ENCODE measurements at regions of chr10 and their contacts with region 1.

Region 1: GRCh38 chr10:32378363-32379317 is 31.7 kb upstream of the EPC1 start:
- DNase-seq: peak; percentile 83 to 97 (median 90)
- ATAC-seq: peak; percentile 89
- H3K4me3 ChIP-seq: peak overlapping the region; percentile 79
- H3K4me3 Mint-ChIP-seq: no peak overlapping the region
- H3K27ac ChIP-seq: peak overlapping the region; percentile 61 to 81
- H3K27ac Mint-ChIP-seq: no peak overlapping the region
- H3K4me1 ChIP-seq: no peaks in the 10 kb centered on the region
- H3K4me1 Mint-ChIP-seq: peaks cover 20% of the 10 kb centered on the region
- H3K27me3 ChIP-seq: no peaks in the 10 kb centered on the region
- H3K27me3 Mint-ChIP-seq: no peaks in the 10 kb centered on the region
- CTCF ChIP-seq: no peak

Region 2: GRCh38 chr10:32055813-32056600 is 322.6 kb before region 1 on chr10 and contains the start of gene KIF5B:
- CTCF ChIA-PET with region 1: no interaction called
- POLR2A ChIA-PET with region 1: interaction called, 5 read pairs
- intact Hi-C with region 1: loop called in 1 of 2 experiments (anchors 10 kb)
- DNase-seq: peak; percentile 74 to 95 (median 84)
- ATAC-seq: peak; percentile 79
- H3K4me3 ChIP-seq: peak within 1 kb of the TSS; percentile 98
- H3K4me3 Mint-ChIP-seq: peak within 1 kb of the TSS; percentile 95
- H3K27ac ChIP-seq: peak within 1 kb of the TSS; percentile 77 to 92
- H3K27ac Mint-ChIP-seq: peak within 1 kb of the TSS; percentile 95
- H3K4me1 ChIP-seq: peaks cover 18% of the 10 kb centered on the region
- H3K4me1 Mint-ChIP-seq: peaks cover 54% of the 10 kb centered on the region
- H3K27me3 ChIP-seq: no peaks in the 10 kb centered on the region
- H3K27me3 Mint-ChIP-seq: no peaks in the 10 kb centered on the region
- CTCF ChIP-seq: no peak
- total RNA-seq, gene KIF5B: 58.3 to 59.0 TPM

Region 3: DNA sequence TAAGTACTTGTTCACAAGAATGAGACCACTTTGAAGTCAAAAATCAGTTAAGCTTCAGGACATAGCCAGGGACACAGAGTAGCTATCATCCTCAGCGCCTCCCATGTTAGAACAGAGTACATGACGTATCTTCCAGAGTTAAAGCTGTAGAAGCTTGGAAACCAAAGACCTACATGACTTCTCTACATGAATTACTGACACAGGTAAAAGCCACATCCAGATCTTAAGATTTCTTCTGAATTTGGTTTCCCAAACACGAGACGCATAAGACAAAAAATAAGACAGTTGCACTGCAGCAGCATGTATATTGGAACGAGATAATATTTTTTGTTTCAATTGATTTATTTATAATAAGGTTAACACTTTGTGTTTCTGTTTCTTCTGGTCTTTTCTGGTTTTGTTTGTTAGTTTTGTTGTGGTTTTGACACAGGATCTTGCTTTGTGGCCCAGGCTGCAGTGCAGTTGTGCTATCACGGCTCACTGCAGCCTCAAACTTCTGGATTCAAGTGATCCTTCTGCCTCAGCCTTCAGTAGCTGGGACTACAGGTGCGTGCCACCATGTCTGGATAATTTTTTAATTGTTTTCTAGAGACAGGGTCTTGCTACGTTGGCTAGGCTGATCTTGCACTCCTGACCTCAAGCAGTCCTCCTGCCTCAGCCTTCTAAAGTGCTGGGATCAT is 21.4 kb before region 1 on chr10:
- CTCF ChIA-PET with region 1: interaction called, 3 read pairs
- POLR2A ChIA-PET with region 1: interaction called, 35 read pairs
- intact Hi-C with region 1: no loop called
- DNase-seq: peak in 4 of 14 experiments; percentile 36 to 69 (median 65)
- ATAC-seq: peak; percentile 89
- H3K4me3 ChIP-seq: peak overlapping the region; percentile 8
- H3K4me3 Mint-ChIP-seq: peak overlapping the region; percentile 65
- H3K27ac ChIP-seq: peak overlapping the region in 1 of 2 donors; percentile 51
- H3K27ac Mint-ChIP-seq: peak overlapping the region; percentile 86
- H3K4me1 ChIP-seq: peaks cover 70% of the 10 kb centered on the region
- H3K4me1 Mint-ChIP-seq: peaks cover 80% of the 10 kb centered on the region
- H3K27me3 ChIP-seq: no peaks in the 10 kb centered on the region
- H3K27me3 Mint-ChIP-seq: no peaks in the 10 kb centered on the region
- CTCF ChIP-seq: no peak

Region 4: DNA sequence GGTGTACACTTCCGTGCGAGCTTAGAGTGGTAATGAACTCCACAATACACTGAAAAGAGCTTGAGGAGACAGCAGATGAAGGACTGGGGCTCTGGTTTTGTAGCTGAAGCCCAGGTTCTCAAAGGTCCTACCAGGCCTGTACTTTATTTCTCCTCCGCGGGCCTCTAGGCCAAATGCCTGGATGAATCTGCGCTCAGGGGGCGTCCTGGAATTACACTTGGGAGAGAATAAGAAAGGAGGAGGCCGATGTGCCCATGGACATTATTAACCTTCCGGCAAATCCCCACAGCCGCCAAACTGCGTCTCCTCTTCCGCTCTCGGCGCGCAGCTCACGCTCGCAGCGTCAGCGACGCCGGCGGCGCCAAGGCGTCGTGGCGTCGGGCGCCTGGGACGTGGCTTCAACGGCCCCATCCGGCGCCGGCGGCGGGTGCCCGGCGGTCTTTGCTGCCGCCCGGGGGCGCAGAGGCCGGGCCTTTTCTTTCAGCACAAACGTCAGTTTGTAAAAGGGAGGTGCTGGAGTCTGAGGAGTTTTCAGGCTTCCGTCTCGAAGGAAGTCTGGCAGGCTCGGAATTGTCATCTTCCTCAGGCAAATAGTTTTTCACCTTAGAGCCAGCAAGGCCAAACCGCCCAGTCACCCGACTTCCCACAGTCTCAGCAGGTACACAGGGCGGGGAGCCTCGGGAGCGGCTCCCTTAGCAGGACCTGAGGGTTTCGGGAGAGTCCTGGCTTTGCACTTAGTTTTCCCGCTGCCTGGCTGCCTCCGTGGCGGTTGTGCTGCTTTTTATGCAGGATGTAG is 67.3 kb after region 1 on chr10 and contains the start of gene CCDC7:
- CTCF ChIA-PET with region 1: interaction called, 17 read pairs
- POLR2A ChIA-PET with region 1: interaction called, 109 read pairs
- intact Hi-C with region 1: loop called (anchors 2 kb)
- DNase-seq: peak; percentile 74 to 96 (median 82)
- ATAC-seq: peak; percentile 95
- H3K4me3 ChIP-seq: peak within 1 kb of the TSS; percentile 96
- H3K4me3 Mint-ChIP-seq: peak within 1 kb of the TSS; percentile 94
- H3K27ac ChIP-seq: peak within 1 kb of the TSS; percentile 92 to 95
- H3K27ac Mint-ChIP-seq: peak within 1 kb of the TSS; percentile 97
- H3K4me1 ChIP-seq: peaks cover 8% of the 10 kb centered on the region
- H3K4me1 Mint-ChIP-seq: peaks cover 33% of the 10 kb centered on the region
- H3K27me3 ChIP-seq: no peaks in the 10 kb centered on the region
- H3K27me3 Mint-ChIP-seq: no peaks in the 10 kb centered on the region
- CTCF ChIP-seq: peak; percentile 64
- total RNA-seq, gene CCDC7: 69.4 to 72.9 TPM

Region 5: DNA sequence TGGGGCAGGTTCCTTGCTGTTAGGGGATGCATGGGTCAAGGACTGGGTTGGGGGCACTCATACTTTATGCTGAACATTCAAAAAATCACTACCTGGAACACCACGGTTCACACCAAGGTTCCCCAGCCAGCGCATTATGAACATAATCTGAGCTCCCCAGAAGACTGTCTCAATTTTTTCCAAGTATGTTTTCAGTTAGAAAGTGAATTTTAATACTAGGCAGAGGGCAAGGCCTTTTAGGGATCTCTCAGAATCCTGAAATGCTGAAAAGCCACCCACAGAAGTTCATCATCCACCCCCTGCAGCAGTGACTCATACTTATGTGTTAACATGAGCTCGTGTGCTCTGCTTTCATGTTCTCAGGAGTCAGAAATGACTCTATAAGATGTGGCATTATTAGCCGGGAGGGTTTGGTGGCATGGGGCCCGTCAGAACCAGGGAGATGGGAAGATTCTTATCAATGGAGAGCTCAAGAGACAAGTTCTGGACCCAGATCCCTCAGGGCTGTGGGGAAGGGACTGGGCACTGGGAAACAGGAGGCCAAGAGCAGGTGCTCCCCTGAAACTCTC is 764.6 kb after region 1 on chr10:
- CTCF ChIA-PET with region 1: no interaction called
- POLR2A ChIA-PET with region 1: interaction called, 12 read pairs
- intact Hi-C with region 1: no loop called
- DNase-seq: peak in 8 of 14 experiments; percentile 20 to 70 (median 30)
- ATAC-seq: peak; percentile 14
- H3K4me3 ChIP-seq: no peak overlapping the region
- H3K4me3 Mint-ChIP-seq: no peak overlapping the region
- H3K27ac ChIP-seq: no peak overlapping the region
- H3K27ac Mint-ChIP-seq: peak overlapping the region; percentile 52
- H3K4me1 ChIP-seq: peaks cover 70% of the 10 kb centered on the region
- H3K4me1 Mint-ChIP-seq: peaks cover 52% of the 10 kb centered on the region
- H3K27me3 ChIP-seq: no peaks in the 10 kb centered on the region
- H3K27me3 Mint-ChIP-seq: no peaks in the 10 kb centered on the region
- CTCF ChIP-seq: no peak